Activated CD4-positive, alpha-beta T cell treated with anti-CD3 and anti-CD28 coated beads for 36 hours (primary cell): ENCODE measurements at regions of chr4 and their contacts with region 1.

Region 1: DNA sequence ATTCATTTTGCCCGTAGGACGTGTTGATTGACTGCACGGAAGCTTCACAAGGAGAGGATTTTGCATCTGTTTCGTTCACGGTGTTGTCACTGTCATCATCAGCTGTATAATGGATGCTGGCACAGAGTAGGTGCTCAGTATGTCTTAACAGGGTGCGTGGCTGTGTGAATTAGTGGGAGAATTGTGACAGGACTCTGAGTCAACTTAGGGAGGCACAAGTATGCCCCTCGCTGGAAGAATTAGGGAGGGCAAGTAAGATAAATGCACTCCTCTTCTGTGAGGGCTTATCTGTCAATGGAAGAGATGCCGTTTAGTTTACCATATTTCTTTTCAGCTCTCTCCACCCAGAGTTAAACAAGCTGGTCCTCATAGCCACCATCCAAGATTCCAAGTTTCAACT is 107.2 kb downstream of the TRIML1 start:
- DNase-seq: no peak
- ATAC-seq: no peak
- H3K4me3 Mint-ChIP-seq: no peak overlapping the region
- H3K27ac Mint-ChIP-seq: no peak overlapping the region
- H3K4me1 Mint-ChIP-seq: no peaks in the 10 kb centered on the region
- H3K27me3 Mint-ChIP-seq: no peaks in the 10 kb centered on the region

Region 2: DNA sequence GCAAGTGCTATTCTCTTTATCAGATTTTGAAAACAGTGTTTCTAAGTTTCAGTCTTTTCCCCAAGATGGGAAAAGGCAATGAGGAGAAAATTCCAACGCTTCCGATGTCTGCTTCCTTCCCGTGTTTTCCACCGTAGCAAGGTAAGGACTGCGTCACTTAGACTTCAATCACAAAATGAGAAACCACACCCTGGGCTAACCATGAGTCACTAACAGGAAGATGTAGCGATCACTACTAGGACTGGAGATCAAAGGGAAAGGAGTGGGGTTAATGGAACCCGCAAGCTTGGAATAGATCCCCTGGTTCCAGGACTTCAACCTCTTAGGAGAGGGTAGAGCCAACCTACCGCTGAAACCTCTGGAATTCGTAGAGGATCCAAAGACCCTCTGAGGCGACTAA is 501.6 kb before region 1 on chr4:
- CTCF ChIA-PET with region 1: no interaction called
- POLR2A ChIA-PET with region 1: no interaction called
- intact Hi-C with region 1: loop called in 1 of 2 experiments (anchors 5 kb)
- DNase-seq: no peak
- ATAC-seq: no peak
- H3K4me3 Mint-ChIP-seq: no peak overlapping the region
- H3K27ac Mint-ChIP-seq: no peak overlapping the region
- H3K4me1 Mint-ChIP-seq: no peaks in the 10 kb centered on the region
- H3K27me3 Mint-ChIP-seq: no peaks in the 10 kb centered on the region